Naive thymus-derived CD8-positive, alpha-beta T cell (primary cell): ENCODE measurements at regions of chr12 and their contacts with region 1.

Region 1: DNA sequence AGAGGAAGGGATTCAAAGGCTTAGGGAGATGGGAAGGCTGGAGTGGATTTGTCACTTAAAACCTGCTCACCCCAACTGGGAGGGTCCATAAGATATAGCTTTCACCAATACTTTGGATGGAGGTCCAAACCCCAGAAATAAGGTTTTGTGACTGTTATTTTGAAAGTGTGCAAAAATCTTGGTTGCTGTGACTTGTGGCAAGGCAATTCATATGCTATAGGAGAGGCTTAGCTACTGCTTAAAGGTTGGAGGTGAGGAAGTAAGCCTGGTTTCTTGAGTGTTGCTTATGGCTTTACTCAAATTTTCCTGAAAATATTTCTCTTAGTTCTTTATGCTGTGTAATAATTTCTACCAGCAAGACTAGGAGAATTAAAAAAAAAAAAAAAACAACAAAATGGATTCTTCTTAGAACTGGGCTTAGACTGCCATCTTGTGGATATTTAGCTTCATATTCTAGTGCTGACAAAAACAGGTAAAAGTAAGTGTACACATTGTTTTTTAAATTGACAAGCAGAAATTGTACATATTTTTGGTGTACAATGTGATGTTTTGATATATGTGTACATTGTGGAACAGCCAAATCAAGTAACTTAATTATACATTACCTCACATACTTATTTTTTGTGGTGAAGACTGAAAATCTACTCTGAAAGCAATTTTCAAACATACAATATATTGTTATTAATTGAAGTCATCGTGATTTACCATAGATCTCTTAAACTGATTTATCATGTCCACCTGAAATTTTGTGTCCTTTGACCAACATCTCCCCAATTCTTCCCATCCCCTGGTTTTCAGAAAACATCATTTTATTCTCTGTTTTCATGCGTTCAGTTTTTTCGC is 23.0 kb downstream of the PDE6H start:
- DNase-seq: peak in 3 of 10 donors; percentile 63 to 74 (median 68)
- ATAC-seq: peak; percentile 50 to 56
- H3K4me3 Mint-ChIP-seq: peak overlapping the region in 9 of 10 donors; percentile 1 to 76 (median 54)
- H3K27ac Mint-ChIP-seq: peak overlapping the region; percentile 63 to 94 (median 88)
- H3K4me1 Mint-ChIP-seq: peaks cover 19 to 44% (median 31%) of the 10 kb centered on the region in 4 donors
- H3K27me3 Mint-ChIP-seq: peaks cover 0 to 3% (median 0%) of the 10 kb centered on the region in 5 donors

Region 2: DNA sequence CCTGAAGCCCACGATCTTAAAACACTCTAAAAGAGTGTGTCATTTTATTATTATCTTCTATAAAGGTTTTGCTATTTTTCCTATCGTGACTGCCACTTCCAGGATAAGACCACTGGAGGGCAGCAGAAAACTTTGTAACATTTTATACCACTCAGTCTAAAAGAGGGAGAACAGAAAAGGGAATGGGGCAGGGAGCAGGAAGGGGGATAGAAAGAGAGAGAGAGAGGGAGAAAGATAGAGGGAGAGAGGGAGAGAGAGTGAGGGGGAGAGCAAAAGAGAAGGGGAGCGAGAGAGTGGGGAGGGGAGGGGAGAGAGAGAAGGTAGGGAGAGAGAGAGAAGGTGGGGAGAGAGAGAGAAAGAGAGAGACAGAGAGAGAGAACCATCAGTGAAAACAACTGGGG is 150.5 kb before region 1 on chr12:
- POLR2A ChIA-PET with region 1: interaction called, 31 read pairs
- DNase-seq: peak in 9 of 10 donors; percentile 23 to 67 (median 49)
- ATAC-seq: peak; percentile 53 to 73
- H3K4me3 Mint-ChIP-seq: peak overlapping the region in 8 of 10 donors; percentile 7 to 70 (median 52)
- H3K27ac Mint-ChIP-seq: peak overlapping the region in 8 of 10 donors; percentile 4 to 85 (median 69)
- H3K4me1 Mint-ChIP-seq: peaks cover 6 to 17% (median 8%) of the 10 kb centered on the region in 4 donors
- H3K27me3 Mint-ChIP-seq: no peaks in the 10 kb centered on the region

Region 3: GRCh38 chr12:14937689-14938088 is 58.1 kb before region 1 on chr12:
- POLR2A ChIA-PET with region 1: interaction called, 17 read pairs
- DNase-seq: peak in 1 of 10 donors; percentile 15
- ATAC-seq: peak; percentile 39 to 42
- H3K4me3 Mint-ChIP-seq: peak overlapping the region in 5 of 10 donors; percentile 14 to 65 (median 47)
- H3K27ac Mint-ChIP-seq: peak overlapping the region; percentile 89 to 96 (median 92)
- H3K4me1 Mint-ChIP-seq: peaks cover 28 to 81% (median 68%) of the 10 kb centered on the region in 4 donors
- H3K27me3 Mint-ChIP-seq: no peaks in the 10 kb centered on the region

Region 4: GRCh38 chr12:14948672-14949071 is 47.1 kb before region 1 on chr12:
- POLR2A ChIA-PET with region 1: interaction called, 11 read pairs
- DNase-seq: peak in 9 of 10 donors; percentile 44 to 85 (median 71)
- ATAC-seq: peak; percentile 74 to 83
- H3K4me3 Mint-ChIP-seq: peak overlapping the region; percentile 74 to 100 (median 91)
- H3K27ac Mint-ChIP-seq: peak overlapping the region; percentile 95 to 100 (median 98)
- H3K4me1 Mint-ChIP-seq: peaks cover 47 to 94% (median 90%) of the 10 kb centered on the region in 4 donors
- H3K27me3 Mint-ChIP-seq: no peaks in the 10 kb centered on the region